Caco-2 (cell line): ENCODE measurements at regions of chr9 and their contacts with region 1.

Region 1: GRCh38 chr9:83649080-83649479 is 26.1 kb downstream of the IDNK start:
- DNase-seq: peak; percentile 59 to 71
- H3K4me3 ChIP-seq: no peak overlapping the region
- H3K4me3 Mint-ChIP-seq: no peak overlapping the region
- H3K27ac Mint-ChIP-seq: no peak overlapping the region
- H3K4me1 ChIP-seq: no peaks in the 10 kb centered on the region
- H3K4me1 Mint-ChIP-seq: no peaks in the 10 kb centered on the region
- H3K27me3 ChIP-seq: no peaks in the 10 kb centered on the region
- H3K27me3 Mint-ChIP-seq: no peaks in the 10 kb centered on the region
- CTCF ChIP-seq: peak; percentile 43 to 81

Region 2: DNA sequence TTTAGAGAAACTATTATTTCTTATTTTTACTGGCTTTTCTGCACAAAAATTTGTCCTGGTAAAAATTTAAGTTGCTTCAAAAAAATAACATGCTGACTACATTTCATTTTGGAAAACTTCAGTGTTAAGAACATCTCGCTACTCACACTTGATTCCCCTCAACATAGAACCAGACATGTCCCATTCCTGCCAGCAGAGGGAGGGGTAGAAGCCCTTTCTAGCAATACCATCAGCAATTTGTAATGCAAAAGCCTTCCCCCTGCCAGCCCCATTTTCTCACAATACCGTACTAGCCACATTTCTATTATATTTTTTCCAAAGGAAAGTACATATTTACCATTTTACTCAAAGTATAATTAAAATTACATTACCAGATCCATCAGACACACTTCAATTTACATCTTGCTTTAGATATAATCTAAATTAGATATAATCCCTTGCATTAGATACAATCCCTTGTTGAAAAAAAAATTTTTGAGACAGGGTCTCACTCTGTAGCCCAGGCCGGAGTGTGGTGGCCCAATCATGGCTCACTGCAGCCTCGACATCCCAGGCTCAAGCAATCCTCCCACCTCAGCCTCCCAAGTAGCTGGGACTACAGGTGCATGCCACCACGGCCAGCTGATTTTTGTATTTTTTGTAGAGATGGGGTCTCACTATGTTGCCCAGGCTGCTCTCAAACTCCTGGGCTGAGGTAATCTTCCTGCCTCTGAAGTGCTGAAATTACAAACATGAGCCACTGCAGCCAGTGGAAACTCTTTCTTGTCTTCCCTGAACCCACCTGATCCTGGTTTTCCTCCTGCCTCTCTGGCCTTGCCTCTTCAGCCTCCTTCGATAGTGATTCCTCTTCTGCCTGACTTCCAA is 65.7 kb before region 1 on chr9:
- CTCF ChIA-PET with region 1: no interaction called
- POLR2A ChIA-PET with region 1: no interaction called
- intact Hi-C with region 1: loop called (anchors 1 kb)
- DNase-seq: peak; percentile 53 to 54
- H3K4me3 ChIP-seq: no peak overlapping the region
- H3K4me3 Mint-ChIP-seq: no peak overlapping the region
- H3K27ac Mint-ChIP-seq: no peak overlapping the region
- H3K4me1 ChIP-seq: no peaks in the 10 kb centered on the region
- H3K4me1 Mint-ChIP-seq: no peaks in the 10 kb centered on the region
- H3K27me3 ChIP-seq: no peaks in the 10 kb centered on the region
- H3K27me3 Mint-ChIP-seq: no peaks in the 10 kb centered on the region
- CTCF ChIP-seq: peak; percentile 52 to 75

Region 3: DNA sequence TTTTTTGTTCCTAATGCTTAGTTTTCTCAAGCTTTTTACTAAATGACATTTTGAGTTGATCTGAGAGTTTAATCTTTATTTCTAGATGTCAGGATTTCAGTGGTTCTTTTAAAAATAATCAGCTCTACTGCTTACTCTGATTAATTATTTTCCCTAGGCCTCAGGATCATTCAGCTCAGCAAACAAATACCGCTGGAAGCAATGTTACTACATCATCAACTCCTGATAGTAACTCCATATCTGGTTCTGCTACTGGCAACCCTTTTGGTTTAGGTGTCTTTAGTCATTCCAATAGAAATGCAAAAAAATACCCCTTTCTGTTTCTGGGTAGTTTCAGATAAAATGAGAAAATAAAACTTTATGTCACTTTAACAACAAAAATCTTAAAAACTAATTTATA is 31.8 kb before region 1 on chr9:
- CTCF ChIA-PET with region 1: interaction called, 15 read pairs
- POLR2A ChIA-PET with region 1: no interaction called
- intact Hi-C with region 1: loop called (anchors 1 kb)
- DNase-seq: no peak
- H3K4me3 ChIP-seq: no peak overlapping the region
- H3K4me3 Mint-ChIP-seq: no peak overlapping the region
- H3K27ac Mint-ChIP-seq: no peak overlapping the region
- H3K4me1 ChIP-seq: peaks cover 14% of the 10 kb centered on the region
- H3K4me1 Mint-ChIP-seq: peaks cover 7% of the 10 kb centered on the region
- H3K27me3 ChIP-seq: no peaks in the 10 kb centered on the region
- H3K27me3 Mint-ChIP-seq: no peaks in the 10 kb centered on the region
- CTCF ChIP-seq: no peak

Region 4: DNA sequence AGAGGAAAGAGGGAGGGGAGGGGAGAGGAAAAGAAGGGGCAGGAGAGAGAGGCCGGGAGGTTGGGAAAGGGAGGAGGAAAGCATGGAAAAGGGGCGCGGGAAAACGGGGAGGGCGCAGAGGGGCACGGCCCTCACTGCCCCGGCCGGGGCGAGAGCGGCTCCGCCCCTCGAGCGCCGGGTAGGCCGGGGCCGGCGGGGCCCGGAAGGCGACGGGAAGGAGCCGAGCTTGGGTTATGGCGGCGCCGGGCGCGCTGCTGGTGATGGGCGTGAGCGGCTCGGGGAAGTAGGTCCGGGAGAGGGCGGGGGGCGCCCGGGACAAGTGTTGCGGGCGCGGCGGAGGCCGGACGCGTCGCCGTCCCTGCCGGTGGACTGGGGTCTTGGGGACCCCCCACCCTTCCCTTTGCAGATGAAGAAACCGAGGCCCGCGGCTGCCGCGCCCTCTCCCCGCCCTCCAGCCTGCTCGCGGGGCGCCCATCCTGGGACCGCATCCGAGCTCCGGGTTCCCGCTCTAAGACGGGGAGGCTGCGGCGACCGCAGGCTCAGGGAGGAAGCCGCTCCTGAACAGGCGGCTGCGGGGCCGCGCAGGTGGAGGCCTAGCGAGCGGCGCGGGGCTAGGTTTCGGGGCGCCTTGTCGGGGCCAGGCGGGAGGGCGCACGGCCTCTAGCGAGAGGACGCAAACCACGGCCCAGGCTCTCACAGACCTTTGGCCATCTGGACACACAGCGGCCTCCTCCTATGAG is 26.0 kb before region 1 on chr9 and contains the start of gene IDNK:
- CTCF ChIA-PET with region 1: interaction called, 15 read pairs
- POLR2A ChIA-PET with region 1: no interaction called
- intact Hi-C with region 1: loop called (anchors 1 kb)
- DNase-seq: peak; percentile 59 to 77
- H3K4me3 ChIP-seq: peak within 1 kb of the TSS; percentile 65
- H3K4me3 Mint-ChIP-seq: peak within 1 kb of the TSS; percentile 84
- H3K27ac Mint-ChIP-seq: peak within 1 kb of the TSS; percentile 83
- H3K4me1 ChIP-seq: peaks cover 14% of the 10 kb centered on the region
- H3K4me1 Mint-ChIP-seq: peaks cover 20% of the 10 kb centered on the region
- H3K27me3 ChIP-seq: no peaks in the 10 kb centered on the region
- H3K27me3 Mint-ChIP-seq: no peaks in the 10 kb centered on the region
- CTCF ChIP-seq: no peak
- total RNA-seq, gene IDNK: 4.3 and 5.1 TPM in 2 replicates

Region 5: DNA sequence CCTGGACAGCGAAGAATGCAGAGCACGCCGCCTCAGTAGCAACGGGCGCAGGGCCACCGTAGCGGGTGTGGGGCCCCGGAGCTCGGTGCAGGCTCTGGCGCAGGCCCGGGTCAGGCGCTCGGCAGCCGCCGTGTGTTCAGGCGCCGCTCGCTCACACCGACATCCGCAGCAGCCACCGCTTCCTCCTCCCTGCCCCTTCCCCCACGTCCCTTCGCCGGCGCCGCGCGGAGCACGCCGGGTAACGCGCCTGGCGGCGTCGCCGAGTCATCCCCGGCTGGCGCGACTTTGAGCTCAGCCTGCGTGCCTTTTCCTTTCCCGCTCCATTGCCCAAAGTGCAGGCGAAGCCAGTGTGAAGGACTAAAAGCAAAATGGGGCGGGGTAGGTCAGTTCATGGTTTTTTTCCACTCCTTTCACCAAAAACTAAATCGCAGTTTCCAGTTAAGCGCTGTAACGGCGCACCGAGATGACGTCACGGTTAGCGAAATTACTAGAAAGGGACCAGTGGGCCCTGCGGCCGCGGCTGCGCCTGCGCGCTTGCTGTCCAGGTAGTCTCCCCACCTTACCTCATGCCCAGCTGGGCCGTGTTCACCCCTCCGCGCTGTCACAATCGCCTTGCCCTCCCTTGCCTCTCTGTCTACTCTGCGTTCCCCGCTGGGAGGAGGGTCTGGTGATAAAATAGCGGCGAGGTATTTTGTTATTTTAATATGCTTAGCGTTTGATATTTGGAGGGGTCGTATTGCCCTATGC is 58.9 kb after region 1 on chr9 and contains the start of gene UBQLN1:
- CTCF ChIA-PET with region 1: no interaction called
- POLR2A ChIA-PET with region 1: no interaction called
- intact Hi-C with region 1: loop called (anchors 5 kb)
- DNase-seq: peak; percentile 82 to 87
- H3K4me3 ChIP-seq: peak within 1 kb of the TSS; percentile 87
- H3K4me3 Mint-ChIP-seq: peak within 1 kb of the TSS; percentile 90
- H3K27ac Mint-ChIP-seq: peak within 1 kb of the TSS; percentile 99
- H3K4me1 ChIP-seq: 0 out of 2 replicates have a peak, but pooled peaks cover 4% of the 10 kb centered on the region
- H3K4me1 Mint-ChIP-seq: no peaks in the 10 kb centered on the region
- H3K27me3 ChIP-seq: no peaks in the 10 kb centered on the region
- H3K27me3 Mint-ChIP-seq: no peaks in the 10 kb centered on the region
- CTCF ChIP-seq: no peak
- total RNA-seq, gene UBQLN1: 56.0 and 56.3 TPM in 2 replicates